GM12878 (cell line): ENCODE measurements at regions of chr4 and their contacts with region 1.

Region 1: DNA sequence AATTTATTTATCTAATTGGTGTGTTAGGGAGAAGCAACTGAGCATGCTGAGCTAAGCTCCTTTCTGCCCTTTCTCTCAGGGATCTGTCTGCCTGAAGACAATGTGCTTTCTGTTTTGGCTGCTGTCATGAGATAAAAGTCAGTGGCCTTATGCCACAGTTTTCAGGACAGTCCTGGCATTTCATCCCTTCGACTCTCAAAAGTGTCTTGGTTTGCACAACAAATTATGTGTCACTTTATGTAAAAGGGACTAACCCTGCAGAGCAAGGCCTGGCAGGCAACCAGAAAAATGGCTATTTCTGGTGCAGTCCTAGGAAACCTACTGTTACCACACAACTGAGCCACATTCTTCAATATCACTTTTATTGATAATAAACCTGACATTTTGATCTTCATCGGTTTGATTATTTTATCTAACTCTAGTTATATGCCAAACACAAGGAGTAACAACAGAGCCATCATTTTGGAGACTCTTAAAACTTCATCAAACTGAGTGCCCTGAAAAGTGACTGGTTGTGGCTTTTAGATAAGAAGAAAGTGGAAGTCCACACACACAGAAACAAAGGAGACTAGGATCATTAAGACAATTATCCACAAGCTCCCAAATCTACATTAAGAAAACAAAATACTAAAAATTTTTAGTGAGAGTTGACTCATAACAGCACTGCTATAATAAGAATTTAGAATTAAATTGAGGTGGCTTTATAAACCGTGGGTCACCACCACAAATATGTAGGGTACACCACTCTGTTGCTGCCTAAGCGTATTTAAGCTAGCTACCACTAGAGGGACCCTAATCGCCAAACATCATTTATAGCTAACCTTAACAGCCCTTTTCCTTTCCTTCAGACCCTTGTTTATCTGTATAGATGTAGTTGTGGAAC is 95.9 kb upstream of the PTPN13 start:
- DNase-seq: no peak
- ATAC-seq: peak; percentile 93
- H3K4me3 ChIP-seq: no peak overlapping the region
- H3K27ac ChIP-seq: no peak overlapping the region
- H3K4me1 ChIP-seq: no peaks in the 10 kb centered on the region
- H3K27me3 ChIP-seq: no peaks in the 10 kb centered on the region
- CTCF ChIP-seq: peak; percentile 74 to 85 (median 84); a peak in 5 of 6 replicates
- EP300 ChIP-seq: no peak
- POLR2A ChIP-seq: no peak
- RAD21 ChIP-seq: peak; percentile 88

Region 2: GRCh38 chr4:86508436-86508835 is 10.2 kb after region 1 on chr4:
- CTCF ChIA-PET with region 1: interaction called, 89 read pairs
- POLR2A ChIA-PET with region 1: no interaction called
- RAD21 ChIA-PET with region 1: interaction called, 55 read pairs
- SMC1A ChIA-PET with region 1: interaction called, 82 read pairs
- in situ Hi-C with region 1: no loop called
- intact Hi-C with region 1: no loop called
- DNase-seq: no peak
- ATAC-seq: peak; percentile 67
- H3K4me3 ChIP-seq: no peak overlapping the region
- H3K27ac ChIP-seq: no peak overlapping the region
- H3K4me1 ChIP-seq: no peaks in the 10 kb centered on the region
- H3K27me3 ChIP-seq: peaks cover 0 to 2% of the 10 kb centered on the region in 2 experiments; a peak in 1 of 4 replicates
- CTCF ChIP-seq: no peak
- EP300 ChIP-seq: no peak
- POLR2A ChIP-seq: no peak
- RAD21 ChIP-seq: no peak

Region 3: DNA sequence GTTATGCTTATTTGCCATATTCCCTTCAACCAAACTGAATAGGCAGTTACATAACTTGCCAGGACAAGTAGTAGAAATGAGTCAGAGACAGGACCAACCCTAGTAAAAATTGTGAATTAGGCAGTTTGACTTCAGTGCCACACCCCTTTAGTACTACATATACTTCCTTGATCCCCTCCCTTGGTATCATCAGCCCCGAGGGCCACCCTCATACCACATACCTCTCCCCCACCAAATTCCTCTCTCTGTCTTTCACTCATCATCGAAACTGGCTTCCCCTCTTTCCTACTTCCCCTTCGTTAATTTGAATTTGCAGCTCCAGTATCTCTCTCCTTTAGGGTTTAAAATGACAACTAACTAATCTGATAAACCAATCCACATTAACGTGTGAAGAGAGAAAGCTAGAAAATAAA is 87.9 kb after region 1 on chr4:
- CTCF ChIA-PET with region 1: interaction called, 124 read pairs
- POLR2A ChIA-PET with region 1: interaction called, 3 read pairs
- RAD21 ChIA-PET with region 1: interaction called, 177 read pairs
- SMC1A ChIA-PET with region 1: interaction called, 164 read pairs
- in situ Hi-C with region 1: no loop called
- intact Hi-C with region 1: no loop called
- DNase-seq: no peak
- ATAC-seq: peak; percentile 76
- H3K4me3 ChIP-seq: no peak overlapping the region
- H3K27ac ChIP-seq: no peak overlapping the region
- H3K4me1 ChIP-seq: 0 out of 2 replicates have a peak, but pooled peaks cover 3% of the 10 kb centered on the region
- H3K27me3 ChIP-seq: no peaks in the 10 kb centered on the region
- CTCF ChIP-seq: no peak
- EP300 ChIP-seq: 0 out of 4 replicates have a peak, but pooled peaks of 1 of the 2 experiments have one; percentile 21
- POLR2A ChIP-seq: no peak
- RAD21 ChIP-seq: no peak

Region 4: DNA sequence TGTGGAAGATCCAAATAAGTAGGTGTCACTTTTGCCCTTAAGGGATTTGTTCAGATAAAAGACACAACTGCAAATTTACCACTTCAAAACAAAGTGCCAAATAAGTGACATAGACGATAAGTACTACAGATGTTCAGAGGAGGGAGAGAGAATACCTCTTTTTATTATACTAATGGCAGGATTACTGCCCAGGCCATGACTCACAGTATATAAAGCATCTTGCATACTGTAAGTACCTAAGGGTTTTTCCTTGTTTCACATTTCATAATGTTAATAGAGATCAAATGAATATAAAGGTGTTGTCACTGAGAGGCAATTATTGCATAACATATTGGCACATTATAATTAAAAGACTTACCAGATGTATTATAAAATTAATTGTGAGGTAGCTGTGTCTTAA is 142.2 kb after region 1 on chr4:
- CTCF ChIA-PET with region 1: interaction called, 3 read pairs
- POLR2A ChIA-PET with region 1: interaction called, 4 read pairs
- RAD21 ChIA-PET with region 1: interaction called, 11 read pairs
- SMC1A ChIA-PET with region 1: interaction called, 16 read pairs
- in situ Hi-C with region 1: no loop called
- intact Hi-C with region 1: no loop called
- DNase-seq: no peak
- ATAC-seq: peak; percentile 62
- H3K4me3 ChIP-seq: no peak overlapping the region
- H3K27ac ChIP-seq: no peak overlapping the region
- H3K4me1 ChIP-seq: no peaks in the 10 kb centered on the region
- H3K27me3 ChIP-seq: no peaks in the 10 kb centered on the region
- CTCF ChIP-seq: no peak
- EP300 ChIP-seq: no peak
- POLR2A ChIP-seq: no peak
- RAD21 ChIP-seq: no peak

Region 5: GRCh38 chr4:86757468-86757867 is 259.2 kb after region 1 on chr4:
- CTCF ChIA-PET with region 1: interaction called, 14 read pairs
- POLR2A ChIA-PET with region 1: no interaction called
- RAD21 ChIA-PET with region 1: interaction called, 7 read pairs
- SMC1A ChIA-PET with region 1: interaction called, 16 read pairs
- in situ Hi-C with region 1: no loop called
- intact Hi-C with region 1: loop called (anchors 5 kb)
- DNase-seq: no peak
- ATAC-seq: no peak
- H3K4me3 ChIP-seq: no peak overlapping the region
- H3K27ac ChIP-seq: no peak overlapping the region
- H3K4me1 ChIP-seq: no peaks in the 10 kb centered on the region
- H3K27me3 ChIP-seq: no peaks in the 10 kb centered on the region
- CTCF ChIP-seq: no peak
- EP300 ChIP-seq: no peak
- POLR2A ChIP-seq: no peak
- RAD21 ChIP-seq: no peak

Region 6: GRCh38 chr4:86901866-86902265 is 403.6 kb after region 1 on chr4:
- CTCF ChIA-PET with region 1: interaction called, 207 read pairs
- POLR2A ChIA-PET with region 1: interaction called, 3 read pairs
- RAD21 ChIA-PET with region 1: interaction called, 17 read pairs
- SMC1A ChIA-PET with region 1: interaction called, 75 read pairs
- in situ Hi-C with region 1: loop called (anchors 5 kb)
- intact Hi-C with region 1: no loop called
- DNase-seq: no peak
- ATAC-seq: no peak
- H3K4me3 ChIP-seq: no peak overlapping the region
- H3K27ac ChIP-seq: no peak overlapping the region
- H3K4me1 ChIP-seq: no peaks in the 10 kb centered on the region
- H3K27me3 ChIP-seq: no peaks in the 10 kb centered on the region
- CTCF ChIP-seq: no peak
- EP300 ChIP-seq: no peak
- POLR2A ChIP-seq: no peak
- RAD21 ChIP-seq: no peak